ENCODE measurements at regions of chr7 and their contacts with region 1.

Region 1: GRCh38 chr7:4641667-4642467 is 40.2 kb upstream of the FOXK1 start:
- DNase-seq: peak; percentile 98
- H3K4me3 ChIP-seq: peak overlapping the region; percentile 54 to 66 (median 61)
- H3K27ac ChIP-seq: peak overlapping the region; percentile 87 to 90 (median 90)
- H3K4me1 ChIP-seq: peaks cover 2 to 13% (median 10%) of the 10 kb centered on the region in 4 donors
- H3K27me3 ChIP-seq: no peaks in the 10 kb centered on the region
- CTCF ChIP-seq: peak in 2 of 4 experiments; percentile 25 to 50
- EP300 ChIP-seq: no peak
- POLR2A ChIP-seq: peak; percentile 45 to 46

Region 2: GRCh38 chr7:4561795-4562194 is 80.1 kb before region 1 on chr7:
- intact Hi-C with region 1: no loop called
- DNase-seq: no peak
- H3K4me3 ChIP-seq: no peak overlapping the region
- H3K27ac ChIP-seq: no peak overlapping the region
- H3K4me1 ChIP-seq: no peaks in the 10 kb centered on the region
- H3K27me3 ChIP-seq: peaks cover 0 to 3% (median 0%) of the 10 kb centered on the region in 3 donors
- CTCF ChIP-seq: no peak
- EP300 ChIP-seq: no peak
- POLR2A ChIP-seq: no peak

Region 3: GRCh38 chr7:4613846-4614548 is 27.9 kb before region 1 on chr7:
- intact Hi-C with region 1: no loop called
- DNase-seq: no peak
- H3K4me3 ChIP-seq: peak overlapping the region in 3 of 4 donors; percentile 18 to 35 (median 27)
- H3K27ac ChIP-seq: peak overlapping the region; percentile 50 to 73 (median 67)
- H3K4me1 ChIP-seq: peaks cover 0 to 16% (median 10%) of the 10 kb centered on the region in 4 donors
- H3K27me3 ChIP-seq: no peaks in the 10 kb centered on the region
- CTCF ChIP-seq: no peak
- EP300 ChIP-seq: peak in 1 of 4 donors; percentile 25
- POLR2A ChIP-seq: no peak

Region 4: GRCh38 chr7:4659551-4660286 is 17.9 kb after region 1 on chr7:
- intact Hi-C with region 1: loop called (anchors 2 kb)
- DNase-seq: no peak
- H3K4me3 ChIP-seq: no peak overlapping the region
- H3K27ac ChIP-seq: no peak overlapping the region
- H3K4me1 ChIP-seq: peaks cover 0 to 14% (median 9%) of the 10 kb centered on the region in 4 donors
- H3K27me3 ChIP-seq: no peaks in the 10 kb centered on the region
- CTCF ChIP-seq: no peak
- EP300 ChIP-seq: no peak
- POLR2A ChIP-seq: no peak

Region 5: GRCh38 chr7:4681886-4682620 is 40.2 kb after region 1 on chr7 and contains the start of gene FOXK1:
- intact Hi-C with region 1: loop called (anchors 1 kb)
- DNase-seq: peak; percentile 88
- H3K4me3 ChIP-seq: peak within 1 kb of the TSS; percentile 76 to 98 (median 88)
- H3K27ac ChIP-seq: peak within 1 kb of the TSS; percentile 93 to 96 (median 94)
- H3K4me1 ChIP-seq: peaks cover 0 to 40% (median 30%) of the 10 kb centered on the region in 4 donors
- H3K27me3 ChIP-seq: no peaks in the 10 kb centered on the region
- CTCF ChIP-seq: no peak
- EP300 ChIP-seq: no peak
- POLR2A ChIP-seq: peak in 1 of 2 donors; percentile 33
- total RNA-seq, gene FOXK1: 15.8 to 47.1 (median 18.0) TPM

Region 6: DNA sequence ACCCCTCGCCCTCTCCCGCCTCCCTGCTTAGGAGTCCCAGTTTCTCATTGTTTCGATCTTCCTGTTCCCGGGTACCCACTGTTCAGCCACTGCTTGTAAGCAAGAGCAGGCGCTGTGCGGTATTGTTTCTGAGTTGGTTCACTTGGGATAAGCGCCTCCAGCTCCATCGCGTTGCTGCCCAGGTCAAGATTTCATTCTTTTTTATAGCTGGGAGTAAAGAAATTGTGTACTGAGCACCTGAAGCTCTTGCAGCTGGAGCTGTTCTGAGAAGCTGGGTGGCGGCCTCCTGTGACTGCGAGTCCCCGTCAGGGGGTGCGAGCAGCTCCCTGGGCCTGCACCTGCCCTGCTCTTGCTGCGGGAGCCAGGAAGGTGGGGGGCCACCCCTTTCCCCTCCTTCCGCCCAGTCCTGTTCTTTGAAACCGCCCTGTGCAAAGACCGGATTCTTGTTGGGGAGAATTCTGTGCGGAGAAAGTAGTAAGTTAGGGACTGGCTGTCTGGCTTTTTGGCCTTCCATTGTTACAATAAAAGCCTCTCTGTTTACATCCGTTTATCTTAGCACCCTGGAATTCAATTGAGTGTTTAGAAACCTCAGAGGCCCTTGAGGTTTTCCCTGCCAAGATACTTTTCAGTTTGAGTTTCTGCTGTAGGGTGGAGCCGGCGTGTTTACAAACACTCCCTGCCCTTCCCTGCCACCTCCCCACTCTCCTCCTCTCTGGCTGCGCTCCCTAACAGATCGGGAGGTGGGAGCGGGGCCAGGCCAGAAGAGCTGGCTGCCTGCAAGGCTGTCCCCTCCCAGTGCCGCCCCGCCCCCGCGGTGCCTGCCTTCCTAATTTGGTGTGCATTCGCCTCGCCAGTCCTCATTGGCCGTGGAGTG is 102.8 kb after region 1 on chr7:
- intact Hi-C with region 1: loop called (anchors 2 kb)
- DNase-seq: peak; percentile 99
- H3K4me3 ChIP-seq: peak overlapping the region; percentile 12 to 39 (median 26)
- H3K27ac ChIP-seq: peak overlapping the region; percentile 93 to 96 (median 93)
- H3K4me1 ChIP-seq: peaks cover 0 to 62% (median 57%) of the 10 kb centered on the region in 4 donors
- H3K27me3 ChIP-seq: no peaks in the 10 kb centered on the region
- CTCF ChIP-seq: no peak
- EP300 ChIP-seq: peak in 3 of 4 donors; percentile 31 to 74 (median 59)
- POLR2A ChIP-seq: no peak

Region 7: DNA sequence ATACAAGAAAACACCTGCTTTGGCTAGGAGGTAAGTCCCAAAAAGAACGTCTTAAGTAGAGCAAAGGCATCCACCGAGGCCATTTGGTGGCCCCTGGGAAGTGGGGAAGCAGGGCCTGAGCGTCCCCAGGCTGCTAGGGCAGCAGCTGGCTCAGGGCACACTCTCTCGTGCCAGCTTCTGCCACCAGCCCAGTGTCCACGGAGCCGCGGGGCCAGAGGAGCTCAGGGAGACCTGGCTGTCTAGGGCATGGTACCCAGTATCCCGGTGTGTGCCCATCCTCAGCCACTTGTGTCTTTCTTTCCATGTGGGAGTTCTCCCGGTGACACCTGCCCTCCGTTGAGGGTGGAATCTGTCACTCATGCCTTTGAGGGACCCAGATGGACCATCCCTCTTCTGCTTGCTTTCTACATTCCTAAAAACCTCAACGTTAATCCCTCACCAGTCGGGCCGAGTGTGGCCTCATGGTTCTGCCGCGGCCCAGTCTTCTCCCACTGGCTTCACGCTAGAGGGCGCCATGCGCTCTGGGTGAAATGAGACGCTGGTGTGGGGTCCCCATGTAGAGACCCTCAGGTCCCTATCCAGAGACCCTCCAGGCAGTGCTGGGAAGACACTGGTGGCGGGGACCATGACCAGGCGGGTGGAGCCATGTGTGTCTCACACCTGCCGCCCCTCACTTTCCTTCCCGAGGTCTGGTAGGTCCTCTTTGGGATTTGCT is 124.1 kb after region 1 on chr7:
- intact Hi-C with region 1: loop called (anchors 5 kb)
- DNase-seq: no peak
- H3K4me3 ChIP-seq: peak overlapping the region in 3 of 4 donors; percentile 47 to 53 (median 51)
- H3K27ac ChIP-seq: peak overlapping the region; percentile 82 to 99 (median 96)
- H3K4me1 ChIP-seq: peaks cover 0 to 62% (median 51%) of the 10 kb centered on the region in 4 donors
- H3K27me3 ChIP-seq: no peaks in the 10 kb centered on the region
- CTCF ChIP-seq: peak in 3 of 4 experiments; percentile 9 to 48 (median 26)
- EP300 ChIP-seq: no peak
- POLR2A ChIP-seq: no peak

Region 8: DNA sequence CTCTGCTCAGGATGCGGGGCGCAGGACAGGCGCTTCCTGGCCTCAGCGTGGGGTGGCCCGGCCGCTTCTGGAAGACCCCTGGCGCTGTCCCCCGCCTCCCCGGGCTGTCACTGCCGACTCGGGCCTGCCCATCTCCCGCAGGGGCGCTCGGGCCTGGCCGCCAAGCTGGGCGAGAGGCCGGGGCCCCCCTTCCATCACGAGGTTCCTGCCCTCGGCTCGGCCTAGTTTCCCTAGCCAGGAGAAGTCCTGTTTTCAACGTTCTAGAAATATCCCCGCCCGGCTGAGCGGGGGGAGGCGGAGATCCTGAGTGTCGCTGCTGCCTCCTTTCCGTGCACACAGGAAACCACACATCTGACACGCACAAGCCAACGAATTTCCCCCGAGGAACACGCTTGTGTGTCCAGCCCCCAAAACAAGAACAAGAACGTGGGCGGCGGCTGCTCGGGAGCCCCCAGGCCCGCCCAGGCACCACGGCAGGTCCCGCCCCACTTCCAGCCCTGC is 167.3 kb after region 1 on chr7:
- intact Hi-C with region 1: no loop called
- DNase-seq: peak; percentile 76
- H3K4me3 ChIP-seq: peak overlapping the region in 1 of 4 donors; percentile 20
- H3K27ac ChIP-seq: peak overlapping the region in 1 of 4 donors; percentile 46
- H3K4me1 ChIP-seq: no peaks in the 10 kb centered on the region
- H3K27me3 ChIP-seq: peaks cover 0 to 8% (median 5%) of the 10 kb centered on the region in 3 donors
- CTCF ChIP-seq: no peak
- EP300 ChIP-seq: no peak
- POLR2A ChIP-seq: no peak

Measured in sigmoid colon (tissue), 7 donors.